Heart left ventricle (tissue), 16 donors: ENCODE measurements at regions of chr2 and their contacts with region 1.

Region 1: GRCh38 chr2:201466050-201466675 is 14.6 kb downstream of the STRADB start:
- DNase-seq: no peak
- ATAC-seq: peak; percentile 38 to 89 (median 65)
- H3K4me3 ChIP-seq: no peak overlapping the region
- H3K27ac ChIP-seq: peak overlapping the region in 10 of 12 donors; percentile 30 to 81 (median 58)
- H3K4me1 ChIP-seq: peaks cover 0 to 28% (median 10%) of the 10 kb centered on the region in 12 donors
- H3K27me3 ChIP-seq: no peaks in the 10 kb centered on the region
- CTCF ChIP-seq: no peak
- POLR2A ChIP-seq: no peak

Region 2: DNA sequence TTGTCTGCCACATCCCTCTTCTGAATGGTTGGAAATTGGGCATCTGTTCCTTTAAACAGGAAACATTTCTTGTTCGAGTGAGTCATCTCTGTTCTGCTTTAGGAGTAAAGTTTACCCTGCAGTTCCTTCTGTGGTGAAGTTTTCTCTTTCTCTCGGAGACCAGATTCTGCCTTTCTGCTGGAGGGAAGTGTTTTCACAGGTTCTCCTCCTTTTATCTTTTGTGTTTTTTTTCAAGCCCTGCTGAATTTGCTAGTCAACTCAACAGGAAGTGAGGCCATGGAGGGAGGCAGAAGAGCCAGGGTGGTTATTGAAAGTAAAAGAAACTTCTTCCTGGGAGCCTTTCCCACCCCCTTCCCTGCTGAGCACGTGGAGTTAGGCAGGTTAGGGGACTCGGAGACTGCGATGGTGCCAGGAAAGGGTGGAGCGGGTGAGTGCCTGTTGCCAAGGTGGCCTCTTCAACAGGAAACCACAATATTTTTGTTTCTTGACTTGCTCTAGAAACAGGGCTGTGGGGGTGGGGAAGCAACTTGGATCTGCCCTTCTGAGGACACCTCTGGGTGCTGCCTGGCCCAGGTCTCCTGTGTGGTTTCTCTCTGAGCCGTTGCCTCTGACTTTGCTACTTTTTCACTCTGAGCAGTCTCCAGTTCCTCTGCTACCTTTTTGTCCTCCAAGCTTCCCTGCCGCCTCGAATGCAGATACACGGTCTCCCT is 208.1 kb before region 1 on chr2:
- intact Hi-C with region 1: loop called in 1 of 10 experiments (anchors 10 kb)
- DNase-seq: peak; percentile 60 to 76 (median 67)
- ATAC-seq: peak; percentile 52 to 84 (median 78)
- H3K4me3 ChIP-seq: peak overlapping the region; percentile 16 to 73 (median 60)
- H3K27ac ChIP-seq: peak overlapping the region; percentile 52 to 97 (median 84)
- H3K4me1 ChIP-seq: peaks cover 0 to 79% (median 4%) of the 10 kb centered on the region in 12 donors
- H3K27me3 ChIP-seq: no peaks in the 10 kb centered on the region
- CTCF ChIP-seq: no peak
- POLR2A ChIP-seq: no peak

Region 3: GRCh38 chr2:201396595-201396994 is 69.6 kb before region 1 on chr2:
- intact Hi-C with region 1: loop called in 2 of 10 experiments (anchors 5 kb)
- DNase-seq: no peak
- ATAC-seq: no peak
- H3K4me3 ChIP-seq: no peak overlapping the region
- H3K27ac ChIP-seq: no peak overlapping the region
- H3K4me1 ChIP-seq: peaks cover 0 to 15% (median 6%) of the 10 kb centered on the region in 12 donors
- H3K27me3 ChIP-seq: no peaks in the 10 kb centered on the region
- CTCF ChIP-seq: no peak
- POLR2A ChIP-seq: no peak

Region 4: GRCh38 chr2:201406077-201406662 is 60.0 kb before region 1 on chr2:
- intact Hi-C with region 1: loop called in 1 of 10 experiments (anchors 5 kb)
- DNase-seq: peak in 1 of 5 donors; percentile 37
- ATAC-seq: peak in 3 of 4 donors; percentile 13 to 61 (median 38)
- H3K4me3 ChIP-seq: peak overlapping the region in 11 of 12 donors; percentile 9 to 51 (median 27)
- H3K27ac ChIP-seq: peak overlapping the region; percentile 53 to 80 (median 72)
- H3K4me1 ChIP-seq: peaks cover 2 to 73% (median 54%) of the 10 kb centered on the region in 12 donors
- H3K27me3 ChIP-seq: no peaks in the 10 kb centered on the region
- CTCF ChIP-seq: no peak
- POLR2A ChIP-seq: no peak

Region 5: GRCh38 chr2:201558665-201559064 is 92.5 kb after region 1 on chr2:
- intact Hi-C with region 1: no loop called
- DNase-seq: no peak
- ATAC-seq: no peak
- H3K4me3 ChIP-seq: no peak overlapping the region
- H3K27ac ChIP-seq: no peak overlapping the region
- H3K4me1 ChIP-seq: no peaks in the 10 kb centered on the region
- H3K27me3 ChIP-seq: no peaks in the 10 kb centered on the region
- CTCF ChIP-seq: no peak
- POLR2A ChIP-seq: no peak

Region 6: GRCh38 chr2:201715483-201715882 is 249.3 kb after region 1 on chr2:
- intact Hi-C with region 1: loop called in 2 of 10 experiments (anchors 10 kb)
- DNase-seq: no peak
- ATAC-seq: no peak
- H3K4me3 ChIP-seq: no peak overlapping the region
- H3K27ac ChIP-seq: no peak overlapping the region
- H3K4me1 ChIP-seq: no peaks in the 10 kb centered on the region
- H3K27me3 ChIP-seq: no peaks in the 10 kb centered on the region
- CTCF ChIP-seq: no peak
- POLR2A ChIP-seq: no peak